GM12878 (cell line): ENCODE measurements at regions of chr16 and their contacts with region 1.

Region 1: DNA sequence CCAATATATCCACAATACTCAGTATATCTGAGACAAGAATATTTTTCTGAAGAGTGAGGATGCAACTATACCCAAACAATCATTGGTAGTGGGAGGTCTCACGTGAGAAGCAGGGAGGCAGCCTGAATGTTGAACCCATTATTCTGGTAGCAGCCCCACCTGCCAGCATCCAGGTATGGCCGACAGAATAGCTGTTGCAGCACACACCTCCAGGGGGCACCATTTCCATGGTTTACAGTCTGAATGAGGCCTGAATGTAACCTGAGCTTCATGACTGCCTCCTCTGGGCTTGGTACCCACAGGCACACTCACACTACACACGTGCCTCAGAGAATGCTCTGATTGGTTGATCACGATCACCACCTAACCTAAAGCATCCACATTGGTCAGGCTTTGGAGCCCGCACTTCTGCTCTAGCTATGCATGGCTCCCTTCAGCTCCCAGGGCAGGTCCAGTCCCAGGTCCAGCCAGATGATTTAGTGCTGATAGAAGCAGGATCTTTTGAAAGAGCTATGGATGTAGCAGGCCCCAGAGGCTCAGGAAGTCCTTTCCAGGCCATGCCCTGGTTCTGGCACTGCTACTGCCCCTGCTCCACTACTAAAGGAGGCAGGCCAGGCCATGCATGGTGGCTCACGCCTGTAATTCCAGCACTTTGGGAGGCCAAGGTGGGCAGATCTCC is 11.0 kb upstream of the CBFB start:
- DNase-seq: peak; percentile 82
- ATAC-seq: peak; percentile 96
- H3K4me3 ChIP-seq: no peak overlapping the region
- H3K27ac ChIP-seq: no peak overlapping the region
- H3K4me1 ChIP-seq: peaks cover 13% of the 10 kb centered on the region; the same call in 1 of the 2 replicates
- H3K27me3 ChIP-seq: peaks cover 0 to 2% of the 10 kb centered on the region in 2 experiments; a peak in 3 of 4 replicates
- CTCF ChIP-seq: peak; percentile 81 to 93 (median 93)
- EP300 ChIP-seq: no peak
- POLR2A ChIP-seq: no peak
- RAD21 ChIP-seq: peak; percentile 93

Region 2: GRCh38 chr16:66954097-66954659 is 63.8 kb before region 1 on chr16:
- CTCF ChIA-PET with region 1: interaction called, 12 read pairs
- POLR2A ChIA-PET with region 1: no interaction called
- RAD21 ChIA-PET with region 1: interaction called, 9 read pairs
- SMC1A ChIA-PET with region 1: interaction called, 7 read pairs
- in situ Hi-C with region 1: no loop called
- intact Hi-C with region 1: loop called (anchors 10 kb)
- DNase-seq: peak; percentile 45
- ATAC-seq: peak; percentile 82
- H3K4me3 ChIP-seq: no peak overlapping the region
- H3K27ac ChIP-seq: no peak overlapping the region
- H3K4me1 ChIP-seq: peaks cover 9% of the 10 kb centered on the region
- H3K27me3 ChIP-seq: no peaks in the 10 kb centered on the region
- CTCF ChIP-seq: peak; percentile 76 to 92 (median 90)
- EP300 ChIP-seq: no peak
- POLR2A ChIP-seq: no peak
- RAD21 ChIP-seq: peak; percentile 90

Region 3: DNA sequence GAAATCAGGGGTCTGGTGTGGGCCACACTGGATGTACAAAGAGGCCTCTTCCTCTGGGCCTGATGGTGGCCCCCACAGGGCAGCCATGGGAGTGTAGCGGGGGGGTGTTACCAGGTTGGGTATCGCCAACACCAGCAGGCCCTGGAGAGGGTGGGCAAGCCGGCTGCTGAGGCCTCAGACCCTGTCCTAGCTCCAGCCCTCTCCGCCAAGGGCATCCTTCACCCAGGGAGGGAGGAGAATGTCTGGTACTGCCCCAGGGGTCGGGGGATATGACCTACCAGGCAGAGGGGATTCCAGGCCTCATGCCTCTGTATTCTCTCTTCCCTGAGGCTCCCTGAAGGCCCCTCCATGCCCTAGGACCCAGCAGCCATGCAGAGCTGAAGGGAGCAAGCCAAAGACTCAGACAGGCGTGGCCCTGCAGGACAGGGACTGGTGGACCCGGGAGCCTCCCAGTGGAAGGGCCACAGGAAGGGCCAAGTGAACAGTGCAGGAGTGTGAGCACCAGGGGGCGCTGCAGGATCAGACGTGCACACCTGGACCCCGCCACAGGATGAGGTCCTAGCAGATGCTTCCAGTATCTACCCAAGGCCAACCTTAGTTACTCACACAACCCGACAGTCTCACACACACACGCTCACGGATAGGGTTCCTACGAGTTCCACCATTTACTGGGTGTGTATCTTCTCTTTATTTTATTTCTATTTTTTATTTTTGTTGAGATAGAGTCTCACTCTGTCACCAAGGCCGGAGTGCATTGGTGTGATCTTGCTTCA is 40.4 kb before region 1 on chr16:
- CTCF ChIA-PET with region 1: interaction called, 16 read pairs
- POLR2A ChIA-PET with region 1: no interaction called
- RAD21 ChIA-PET with region 1: interaction called, 4 read pairs
- SMC1A ChIA-PET with region 1: interaction called, 3 read pairs
- in situ Hi-C with region 1: no loop called
- intact Hi-C with region 1: loop called (anchors 5 kb)
- DNase-seq: peak; percentile 21
- ATAC-seq: peak; percentile 99
- H3K4me3 ChIP-seq: no peak overlapping the region
- H3K27ac ChIP-seq: no peak overlapping the region
- H3K4me1 ChIP-seq: peaks cover 3% of the 10 kb centered on the region; the same call in 1 of the 2 replicates
- H3K27me3 ChIP-seq: no peaks in the 10 kb centered on the region
- CTCF ChIP-seq: peak; percentile 92 to 99 (median 95); a peak in 5 of 6 replicates
- EP300 ChIP-seq: no peak
- POLR2A ChIP-seq: no peak
- RAD21 ChIP-seq: peak; percentile 92

Region 4: DNA sequence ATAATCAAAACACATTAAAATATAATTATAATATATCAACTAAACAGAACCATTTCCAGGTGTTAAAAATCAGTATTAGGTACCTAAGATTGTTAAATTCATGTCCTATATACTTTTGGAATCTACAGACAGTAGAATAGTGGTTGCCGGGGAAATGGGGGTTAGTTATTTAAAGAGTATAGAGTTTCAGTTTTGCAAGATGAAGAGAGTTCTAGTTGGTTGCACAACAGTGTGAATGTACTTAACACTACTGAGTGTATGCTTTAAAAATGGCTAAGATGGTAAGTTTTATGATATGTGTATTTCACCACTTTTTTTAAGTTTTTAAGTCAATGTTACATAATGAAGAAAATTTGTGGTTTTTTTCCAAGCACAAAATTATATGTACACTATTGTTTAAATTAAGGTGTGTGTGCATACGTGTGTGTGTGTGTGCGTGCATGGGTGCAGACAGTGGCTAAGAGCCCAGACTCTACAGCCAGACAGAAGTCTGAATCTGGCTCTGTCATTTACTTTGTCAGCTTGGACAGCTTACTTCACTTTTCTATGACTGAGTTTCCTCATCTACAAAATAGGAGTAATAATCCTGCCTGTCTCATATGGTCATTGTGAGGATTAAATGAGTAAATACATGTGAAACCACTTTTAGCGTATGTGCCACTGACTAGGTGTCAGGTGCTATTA is 66.5 kb after region 1 on chr16:
- CTCF ChIA-PET with region 1: interaction called, 11 read pairs
- POLR2A ChIA-PET with region 1: no interaction called
- RAD21 ChIA-PET with region 1: interaction called, 3 read pairs
- SMC1A ChIA-PET with region 1: interaction called, 5 read pairs
- in situ Hi-C with region 1: no loop called
- intact Hi-C with region 1: no loop called
- DNase-seq: no peak
- ATAC-seq: peak; percentile 96
- H3K4me3 ChIP-seq: no peak overlapping the region
- H3K27ac ChIP-seq: no peak overlapping the region; the same call in 1 of the 2 replicates
- H3K4me1 ChIP-seq: peaks cover 26% of the 10 kb centered on the region
- H3K27me3 ChIP-seq: no peaks in the 10 kb centered on the region
- CTCF ChIP-seq: no peak
- EP300 ChIP-seq: no peak
- POLR2A ChIP-seq: no peak
- RAD21 ChIP-seq: no peak

Region 5: DNA sequence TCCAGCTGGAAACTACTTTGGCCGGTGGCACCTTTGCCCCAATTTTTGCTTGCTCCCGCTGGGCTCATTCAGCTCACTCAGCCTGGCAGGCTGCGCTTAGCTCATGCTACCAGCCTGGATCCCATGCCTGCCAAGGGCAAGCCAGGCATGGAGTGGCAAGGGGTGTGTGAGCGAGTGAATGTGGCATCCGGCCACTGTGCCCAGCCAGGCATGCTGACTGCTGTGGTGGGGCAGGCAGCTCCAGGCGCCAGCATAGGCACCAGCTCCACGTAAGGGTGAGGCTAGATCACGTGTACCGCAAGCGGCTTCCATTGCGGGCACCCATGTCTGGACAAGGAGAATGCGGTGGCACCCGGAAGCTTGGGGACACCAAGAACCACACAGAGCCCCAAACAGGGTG is 123.5 kb after region 1 on chr16:
- CTCF ChIA-PET with region 1: interaction called, 15 read pairs
- POLR2A ChIA-PET with region 1: no interaction called
- RAD21 ChIA-PET with region 1: interaction called, 4 read pairs
- SMC1A ChIA-PET with region 1: interaction called, 8 read pairs
- in situ Hi-C with region 1: no loop called
- intact Hi-C with region 1: no loop called
- DNase-seq: no peak
- ATAC-seq: no peak
- H3K4me3 ChIP-seq: no peak overlapping the region
- H3K27ac ChIP-seq: no peak overlapping the region
- H3K4me1 ChIP-seq: no peaks in the 10 kb centered on the region
- H3K27me3 ChIP-seq: no peaks in the 10 kb centered on the region
- CTCF ChIP-seq: no peak
- EP300 ChIP-seq: no peak
- POLR2A ChIP-seq: no peak
- RAD21 ChIP-seq: no peak

Region 6: GRCh38 chr16:67159593-67160406 is 141.9 kb after region 1 on chr16 and contains the starts of genes FBXL8 and TRADD:
- CTCF ChIA-PET with region 1: interaction called, 67 read pairs
- POLR2A ChIA-PET with region 1: interaction called, 5 read pairs
- RAD21 ChIA-PET with region 1: interaction called, 69 read pairs
- SMC1A ChIA-PET with region 1: interaction called, 18 read pairs
- in situ Hi-C with region 1: loop called (anchors 5 kb)
- intact Hi-C with region 1: loop called (anchors 1 kb)
- DNase-seq: no peak
- ATAC-seq: peak; percentile 75
- H3K4me3 ChIP-seq: peak within 1 kb of the TSS; percentile 95
- H3K27ac ChIP-seq: peak within 1 kb of the TSS; percentile 89
- H3K4me1 ChIP-seq: peaks cover 50% of the 10 kb centered on the region
- H3K27me3 ChIP-seq: peaks cover 0 to 7% of the 10 kb centered on the region in 2 experiments; a peak in 1 of 4 replicates
- CTCF ChIP-seq: peak; percentile 37 to 61 (median 50)
- EP300 ChIP-seq: no peak
- POLR2A ChIP-seq: peak; percentile 86
- RAD21 ChIP-seq: no peak
- polyA plus RNA-seq, gene FBXL8: not detected
- polyA plus RNA-seq, gene TRADD: 1.7 to 3.5 TPM

Region 7: GRCh38 chr16:67183627-67184328 is 165.8 kb after region 1 on chr16 and contains the start of gene MATCAP1:
- CTCF ChIA-PET with region 1: interaction called, 34 read pairs
- POLR2A ChIA-PET with region 1: interaction called, 3 read pairs
- RAD21 ChIA-PET with region 1: interaction called, 9 read pairs
- SMC1A ChIA-PET with region 1: interaction called, 9 read pairs
- in situ Hi-C with region 1: no loop called
- intact Hi-C with region 1: loop called (anchors 2 kb)
- DNase-seq: peak; percentile 91
- ATAC-seq: peak; percentile 96
- H3K4me3 ChIP-seq: peak within 1 kb of the TSS; percentile 76
- H3K27ac ChIP-seq: peak within 1 kb of the TSS; percentile 84
- H3K4me1 ChIP-seq: peaks cover 4% of the 10 kb centered on the region
- H3K27me3 ChIP-seq: peaks cover 0 to 3% of the 10 kb centered on the region in 2 experiments; a peak in 2 of 4 replicates
- CTCF ChIP-seq: no peak
- EP300 ChIP-seq: no peak
- POLR2A ChIP-seq: peak; percentile 76
- RAD21 ChIP-seq: no peak
- polyA plus RNA-seq, gene MATCAP1: 2.8 to 6.6 TPM